ENCODE measurements at regions of chr7 and their contacts with region 1.

Region 1: DNA sequence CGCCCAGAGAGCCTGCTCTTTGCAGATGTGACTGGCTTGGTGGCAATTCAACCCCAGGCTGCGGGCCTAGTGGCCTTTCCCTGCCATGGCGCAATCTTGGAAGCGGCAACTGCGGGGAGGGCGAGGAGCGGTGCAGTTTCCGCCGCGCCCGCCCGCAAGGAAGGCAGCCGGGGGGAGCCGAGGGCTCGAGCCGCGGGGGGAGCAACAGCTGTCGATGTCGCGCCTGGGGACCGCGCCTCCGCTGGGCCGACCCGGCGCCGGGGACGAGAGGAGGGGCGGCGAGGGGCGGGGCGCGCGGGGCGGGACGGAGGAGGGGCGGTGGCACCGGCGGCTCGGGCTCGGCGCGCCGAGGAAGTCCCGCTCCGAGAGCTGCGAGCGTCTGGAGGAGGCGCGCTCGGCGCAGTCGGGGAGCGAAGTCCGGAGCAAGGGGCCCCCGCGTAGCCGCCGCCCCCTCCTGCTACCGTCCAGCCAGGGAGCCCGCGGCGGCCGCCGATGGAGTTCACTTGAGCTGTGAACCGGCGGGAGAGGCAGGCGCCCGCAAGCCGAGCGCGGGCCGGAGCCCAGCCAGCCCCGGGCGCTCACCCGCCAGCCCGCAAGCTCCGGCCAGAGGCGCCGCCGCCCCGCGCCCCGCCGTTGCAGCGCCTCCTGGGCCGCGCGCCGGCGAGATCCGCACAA is 438.1 kb upstream of the GALNT17 start:
- DNase-seq: no peak
- ATAC-seq: peak; percentile 79
- H3K4me3 ChIP-seq: peak overlapping the region; percentile 90
- H3K27ac ChIP-seq: peak overlapping the region; percentile 86; the same call in 1 of the 2 replicates
- H3K4me1 ChIP-seq: no peaks in the 10 kb centered on the region; the same call in 1 of the 2 replicates
- H3K27me3 ChIP-seq: no peaks in the 10 kb centered on the region
- CTCF ChIP-seq: peak in 1 of 3 experiments; percentile 16; a peak in 1 of 6 replicates
- EP300 ChIP-seq: no peak
- POLR2A ChIP-seq: peak; percentile 78
- RAD21 ChIP-seq: no peak

Region 2: GRCh38 chr7:69932034-69932628 is 761.7 kb before region 1 on chr7:
- CTCF ChIA-PET with region 1: interaction called, 3 read pairs
- POLR2A ChIA-PET with region 1: no interaction called
- RAD21 ChIA-PET with region 1: interaction called, 3 read pairs
- SMC1A ChIA-PET with region 1: interaction called, 10 read pairs
- in situ Hi-C with region 1: no loop called
- intact Hi-C with region 1: no loop called
- DNase-seq: no peak
- ATAC-seq: peak; percentile 57
- H3K4me3 ChIP-seq: no peak overlapping the region
- H3K27ac ChIP-seq: no peak overlapping the region
- H3K4me1 ChIP-seq: no peaks in the 10 kb centered on the region
- H3K27me3 ChIP-seq: no peaks in the 10 kb centered on the region
- CTCF ChIP-seq: peak; percentile 48 to 65 (median 60)
- EP300 ChIP-seq: no peak
- POLR2A ChIP-seq: no peak
- RAD21 ChIP-seq: peak; percentile 95

Region 3: DNA sequence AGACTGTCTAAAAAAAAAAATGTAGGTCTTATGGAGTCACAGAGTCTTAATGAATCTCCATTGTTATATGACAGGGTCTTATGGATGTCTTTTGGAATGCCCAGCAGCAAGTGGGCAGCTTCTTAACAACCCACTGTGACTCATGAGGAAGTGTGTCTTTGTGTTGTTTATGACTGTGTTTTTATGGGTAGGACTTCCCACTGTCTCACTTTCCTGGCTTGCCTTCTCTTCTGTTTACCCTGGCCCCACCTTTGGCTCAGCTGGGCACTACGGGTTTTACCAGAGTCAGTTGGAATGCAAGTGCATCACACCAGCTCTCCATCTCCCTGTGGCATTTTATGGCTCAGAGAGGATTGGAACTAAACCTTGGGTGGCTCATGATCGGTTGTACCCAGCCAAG is 515.0 kb before region 1 on chr7:
- CTCF ChIA-PET with region 1: no interaction called
- POLR2A ChIA-PET with region 1: no interaction called
- RAD21 ChIA-PET with region 1: no interaction called
- SMC1A ChIA-PET with region 1: interaction called, 5 read pairs
- in situ Hi-C with region 1: no loop called
- intact Hi-C with region 1: loop called (anchors 5 kb)
- DNase-seq: no peak
- ATAC-seq: 0 out of 3 replicates have a peak, but pooled peaks have one; percentile 15
- H3K4me3 ChIP-seq: no peak overlapping the region
- H3K27ac ChIP-seq: no peak overlapping the region
- H3K4me1 ChIP-seq: peaks cover 12% of the 10 kb centered on the region; the same call in 1 of the 2 replicates
- H3K27me3 ChIP-seq: no peaks in the 10 kb centered on the region
- CTCF ChIP-seq: no peak
- EP300 ChIP-seq: no peak
- POLR2A ChIP-seq: no peak
- RAD21 ChIP-seq: no peak

Region 4: GRCh38 chr7:70426249-70426880 is 267.5 kb before region 1 on chr7:
- CTCF ChIA-PET with region 1: interaction called, 4 read pairs
- POLR2A ChIA-PET with region 1: no interaction called
- RAD21 ChIA-PET with region 1: no interaction called
- SMC1A ChIA-PET with region 1: interaction called, 4 read pairs
- in situ Hi-C with region 1: no loop called
- intact Hi-C with region 1: loop called (anchors 10 kb)
- DNase-seq: no peak
- ATAC-seq: peak; percentile 87
- H3K4me3 ChIP-seq: no peak overlapping the region
- H3K27ac ChIP-seq: no peak overlapping the region
- H3K4me1 ChIP-seq: no peaks in the 10 kb centered on the region
- H3K27me3 ChIP-seq: no peaks in the 10 kb centered on the region
- CTCF ChIP-seq: no peak
- EP300 ChIP-seq: no peak
- POLR2A ChIP-seq: no peak
- RAD21 ChIP-seq: no peak

Region 5: GRCh38 chr7:70647801-70648498 is 45.9 kb before region 1 on chr7:
- CTCF ChIA-PET with region 1: interaction called, 12 read pairs
- POLR2A ChIA-PET with region 1: no interaction called
- RAD21 ChIA-PET with region 1: interaction called, 11 read pairs
- SMC1A ChIA-PET with region 1: interaction called, 35 read pairs
- in situ Hi-C with region 1: no loop called
- intact Hi-C with region 1: no loop called
- DNase-seq: peak; percentile 46
- ATAC-seq: peak; percentile 94
- H3K4me3 ChIP-seq: no peak overlapping the region
- H3K27ac ChIP-seq: no peak overlapping the region
- H3K4me1 ChIP-seq: peaks cover 5% of the 10 kb centered on the region; the same call in 1 of the 2 replicates
- H3K27me3 ChIP-seq: no peaks in the 10 kb centered on the region
- CTCF ChIP-seq: no peak
- EP300 ChIP-seq: no peak
- POLR2A ChIP-seq: no peak
- RAD21 ChIP-seq: no peak

Region 6: DNA sequence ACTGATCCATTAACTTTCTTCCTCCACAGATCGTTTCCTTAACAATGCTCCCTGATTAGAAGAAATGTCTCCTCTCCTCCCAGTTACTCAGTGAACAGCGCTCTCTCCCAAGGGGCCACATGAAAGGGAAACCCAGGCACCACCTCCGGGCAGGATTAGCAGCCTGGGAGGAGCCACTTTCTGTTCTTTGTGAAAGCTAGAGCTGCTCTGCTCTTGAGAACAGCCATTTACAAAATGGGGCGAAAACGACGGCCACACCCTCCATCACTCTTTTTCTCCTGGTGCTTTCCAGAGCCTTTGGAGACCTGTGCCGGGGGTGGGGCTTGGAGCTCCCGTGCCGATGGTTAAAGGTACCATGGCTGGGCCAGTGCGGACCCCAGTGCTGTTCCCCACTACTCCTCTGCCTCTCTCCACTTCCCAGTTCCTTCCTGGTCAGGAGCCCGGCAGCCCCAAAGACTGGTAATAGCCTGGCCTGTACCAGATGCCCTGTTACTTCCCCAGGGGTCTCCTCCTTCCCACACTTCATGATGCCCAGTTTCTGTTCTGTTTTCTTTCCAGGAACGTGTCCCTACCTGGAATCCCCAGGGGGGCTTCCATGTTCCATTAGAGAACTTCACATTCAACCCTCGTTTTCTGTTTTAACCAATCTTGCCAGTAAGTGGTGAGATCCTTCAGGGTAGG is 35.2 kb after region 1 on chr7:
- CTCF ChIA-PET with region 1: interaction called, 38 read pairs
- POLR2A ChIA-PET with region 1: no interaction called
- RAD21 ChIA-PET with region 1: interaction called, 108 read pairs
- SMC1A ChIA-PET with region 1: interaction called, 11 read pairs
- in situ Hi-C with region 1: no loop called
- intact Hi-C with region 1: no loop called
- DNase-seq: no peak
- ATAC-seq: peak; percentile 34
- H3K4me3 ChIP-seq: peak overlapping the region; percentile 13; the same call in 1 of the 2 replicates
- H3K27ac ChIP-seq: peak overlapping the region; percentile 89
- H3K4me1 ChIP-seq: peaks cover 37% of the 10 kb centered on the region
- H3K27me3 ChIP-seq: no peaks in the 10 kb centered on the region
- CTCF ChIP-seq: no peak
- EP300 ChIP-seq: no peak
- POLR2A ChIP-seq: peak; percentile 49
- RAD21 ChIP-seq: no peak